PC-3 (cell line): ENCODE measurements at regions of chr9 and their contacts with region 1.

Region 1: DNA sequence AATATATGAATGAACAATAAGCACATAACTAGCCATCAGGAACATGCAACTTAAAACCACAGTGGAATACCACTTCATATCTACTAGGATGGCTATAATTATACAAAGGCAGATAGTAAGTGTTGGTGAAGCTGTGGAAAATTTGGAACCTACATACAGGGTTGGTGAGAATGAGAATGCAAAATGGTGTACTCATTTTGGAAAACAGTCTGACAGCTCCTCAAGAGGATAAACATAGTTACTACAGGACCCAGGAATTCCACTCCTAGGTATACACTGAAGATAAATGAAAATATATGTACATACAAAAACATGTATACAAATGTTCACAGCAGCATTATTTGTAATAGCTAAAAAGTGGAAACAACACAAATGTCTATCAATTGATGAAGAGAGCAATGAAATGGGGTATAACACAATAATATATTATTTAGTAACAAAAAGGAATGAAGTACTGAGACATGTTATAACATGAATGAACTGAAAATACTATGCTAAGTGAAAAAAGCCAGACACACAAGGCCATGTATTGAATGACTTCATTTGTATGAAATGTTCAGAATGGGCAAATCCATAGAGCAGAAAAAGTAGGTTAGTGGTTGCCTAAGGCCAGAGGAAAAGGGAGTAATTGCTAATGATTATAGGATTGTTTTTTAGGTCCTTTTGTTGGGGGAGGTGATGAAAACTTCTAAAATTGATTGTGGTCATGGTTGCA is 31.2 kb upstream of the CDK5RAP2 start:
- DNase-seq: peak; percentile 21
- ATAC-seq: no peak
- H3K4me3 ChIP-seq: no peak overlapping the region
- H3K27ac ChIP-seq: no peak overlapping the region
- H3K4me1 ChIP-seq: peaks cover 11% of the 10 kb centered on the region
- H3K27me3 ChIP-seq: no peaks in the 10 kb centered on the region
- CTCF ChIP-seq: peak; percentile 45; the same call in 1 of the 2 replicates

Region 2: GRCh38 chr9:120625222-120625621 is 14.1 kb after region 1 on chr9:
- CTCF ChIA-PET with region 1: no interaction called
- POLR2A ChIA-PET with region 1: no interaction called
- intact Hi-C with region 1: no loop called
- DNase-seq: no peak
- ATAC-seq: no peak
- H3K4me3 ChIP-seq: no peak overlapping the region
- H3K27ac ChIP-seq: no peak overlapping the region
- H3K4me1 ChIP-seq: peaks cover 12% of the 10 kb centered on the region
- H3K27me3 ChIP-seq: no peaks in the 10 kb centered on the region
- CTCF ChIP-seq: no peak

Region 3: DNA sequence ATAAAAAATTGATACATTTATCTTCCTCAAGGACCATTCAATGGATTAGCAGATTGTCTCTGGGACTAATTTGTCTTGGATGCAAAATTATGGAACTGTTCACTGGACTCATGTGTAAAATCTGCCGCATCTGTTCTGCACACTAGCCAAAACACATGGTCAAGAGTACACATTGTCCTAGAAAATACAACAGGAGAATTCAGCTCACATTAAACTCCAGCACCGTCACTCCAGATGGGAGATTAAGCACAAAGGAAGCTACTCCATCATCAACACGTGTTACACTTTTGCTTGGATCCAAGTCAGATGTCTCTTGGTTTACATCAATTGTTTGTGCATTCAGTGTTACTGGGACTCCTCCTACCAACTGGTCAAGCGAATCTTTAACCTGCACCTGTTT is 410.2 kb after region 1 on chr9:
- CTCF ChIA-PET with region 1: interaction called, 11 read pairs
- POLR2A ChIA-PET with region 1: no interaction called
- intact Hi-C with region 1: no loop called
- DNase-seq: no peak
- ATAC-seq: no peak
- H3K4me3 ChIP-seq: no peak overlapping the region
- H3K27ac ChIP-seq: no peak overlapping the region
- H3K4me1 ChIP-seq: peaks cover 18% of the 10 kb centered on the region
- H3K27me3 ChIP-seq: no peaks in the 10 kb centered on the region
- CTCF ChIP-seq: no peak

Region 4: GRCh38 chr9:121098567-121099198 is 487.6 kb after region 1 on chr9:
- CTCF ChIA-PET with region 1: no interaction called
- POLR2A ChIA-PET with region 1: no interaction called
- intact Hi-C with region 1: no loop called
- DNase-seq: no peak
- ATAC-seq: no peak
- H3K4me3 ChIP-seq: no peak overlapping the region
- H3K27ac ChIP-seq: no peak overlapping the region
- H3K4me1 ChIP-seq: no peaks in the 10 kb centered on the region
- H3K27me3 ChIP-seq: no peaks in the 10 kb centered on the region
- CTCF ChIP-seq: no peak